Spleen (tissue), 13 donors: ENCODE measurements at regions of chr6 and their contacts with region 1.

Region 1: DNA sequence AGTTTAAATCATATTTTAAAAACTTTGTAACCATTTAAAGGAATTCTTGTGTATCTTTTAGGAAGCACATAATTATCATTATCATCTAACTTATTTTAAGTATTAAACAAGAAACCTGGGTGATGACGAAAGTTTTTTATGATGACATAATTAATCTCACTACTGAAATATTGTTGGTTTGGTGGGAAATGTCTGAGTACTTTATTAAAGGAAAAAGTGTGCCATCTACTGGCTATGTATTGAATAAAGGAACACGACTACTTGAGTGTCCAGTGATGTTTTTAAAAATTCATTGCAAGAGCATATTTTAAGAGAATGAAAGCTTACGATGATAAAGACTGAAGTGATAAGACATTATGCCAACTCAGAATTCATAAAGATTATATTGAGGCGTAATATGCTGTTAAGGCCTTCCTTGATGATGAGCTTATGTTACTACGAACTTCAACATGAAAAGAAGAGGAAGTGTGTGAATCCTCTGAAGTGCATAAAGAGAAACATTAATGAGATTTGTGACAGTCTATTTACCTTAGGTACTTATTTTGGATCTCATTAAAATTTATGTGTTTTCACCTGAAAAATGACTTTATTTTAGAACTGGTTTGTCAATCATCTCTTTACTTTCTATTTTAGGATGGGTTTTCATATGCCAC is 12.0 kb upstream of the TRMT11 start:
- DNase-seq: no peak
- H3K4me3 ChIP-seq: no peak overlapping the region
- H3K27ac ChIP-seq: no peak overlapping the region
- H3K4me1 ChIP-seq: peaks cover 0 to 11% (median 5%) of the 10 kb centered on the region in 6 donors
- H3K27me3 ChIP-seq: no peaks in the 10 kb centered on the region
- CTCF ChIP-seq: peak; percentile 33 to 67 (median 58)
- POLR2A ChIP-seq: no peak

Region 2: GRCh38 chr6:125301435-125302391 is 672.6 kb before region 1 on chr6 and contains the start of gene HDDC2:
- intact Hi-C with region 1: loop called (anchors 10 kb)
- DNase-seq: peak; percentile 94
- H3K4me3 ChIP-seq: peak within 1 kb of the TSS; percentile 59 to 84 (median 62)
- H3K27ac ChIP-seq: peak within 1 kb of the TSS; percentile 85 to 94 (median 90)
- H3K4me1 ChIP-seq: peaks cover 10 to 64% (median 25%) of the 10 kb centered on the region in 6 donors
- H3K27me3 ChIP-seq: no peaks in the 10 kb centered on the region
- CTCF ChIP-seq: no peak
- POLR2A ChIP-seq: no peak
- total RNA-seq, gene HDDC2: 22.4 to 40.9 (median 38.0) TPM

Region 3: GRCh38 chr6:125779924-125780539 is 194.3 kb before region 1 on chr6:
- intact Hi-C with region 1: loop called (anchors 5 kb)
- DNase-seq: peak; percentile 90
- H3K4me3 ChIP-seq: peak overlapping the region; percentile 50 to 83 (median 60)
- H3K27ac ChIP-seq: peak overlapping the region; percentile 93 to 98 (median 96)
- H3K4me1 ChIP-seq: peaks cover 7 to 34% (median 14%) of the 10 kb centered on the region in 6 donors
- H3K27me3 ChIP-seq: no peaks in the 10 kb centered on the region
- CTCF ChIP-seq: peak in 10 of 11 experiments; percentile 38 to 78 (median 58)
- POLR2A ChIP-seq: no peak